ENCODE measurements at regions of chr19 and their contacts with region 1.

Region 1: DNA sequence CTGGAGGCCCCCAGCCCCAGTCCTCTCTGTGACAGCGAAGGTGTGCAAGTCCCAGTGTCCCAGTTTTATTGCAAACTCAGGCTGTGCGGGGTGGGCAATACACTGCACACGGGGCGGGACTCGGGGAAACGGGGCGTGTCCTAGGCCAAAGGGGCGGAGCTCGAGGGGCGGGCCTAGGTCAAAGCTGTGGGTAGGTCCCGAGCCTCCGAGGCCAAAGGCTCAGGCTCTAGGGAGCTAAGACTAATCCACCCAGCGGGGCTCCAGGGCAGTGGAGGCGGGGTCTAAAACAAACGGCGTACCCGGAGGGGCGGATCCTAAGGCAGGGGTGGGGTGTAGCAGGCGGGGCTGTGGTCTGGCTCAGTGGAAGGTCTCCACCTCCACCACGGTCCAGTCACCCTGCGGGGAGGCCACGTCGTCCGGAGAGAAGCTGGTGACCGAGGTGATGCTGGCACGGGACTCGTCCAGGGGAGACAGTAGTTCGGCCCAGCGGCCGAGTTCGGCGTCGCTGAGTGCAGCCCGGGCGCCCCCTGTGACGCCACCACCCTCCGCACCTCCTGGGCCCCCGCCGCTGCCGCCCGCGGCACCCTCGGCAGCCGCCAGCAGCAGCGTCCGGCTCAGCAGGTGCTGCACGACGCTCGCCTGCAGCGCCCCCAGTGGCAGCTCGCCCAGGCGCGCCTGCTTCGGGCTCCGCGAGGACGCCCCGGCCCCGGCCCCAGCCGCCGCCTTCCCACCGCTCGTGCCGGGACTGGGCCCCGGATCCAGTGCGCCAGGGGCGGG is 5.3 kb downstream of the PRR36 start:
- DNase-seq: peak; percentile 85 to 95 (median 92)
- H3K4me3 ChIP-seq: peak overlapping the region; percentile 28 to 75
- H3K4me3 Mint-ChIP-seq: peak overlapping the region; percentile 73 to 88 (median 80)
- H3K27ac ChIP-seq: peak overlapping the region; percentile 61
- H3K27ac Mint-ChIP-seq: peak overlapping the region; percentile 83 to 96 (median 91)
- H3K4me1 ChIP-seq: peaks cover 43% of the 10 kb centered on the region
- H3K4me1 Mint-ChIP-seq: peaks cover 21 to 48% (median 36%) of the 10 kb centered on the region in 4 donors
- H3K27me3 ChIP-seq: no peaks in the 10 kb centered on the region
- H3K27me3 Mint-ChIP-seq: peaks cover 5 to 17% of the 10 kb centered on the region in 2 donors

Region 2: GRCh38 chr19:7562646-7563393 is 306.0 kb before region 1 on chr19:
- CTCF ChIA-PET with region 1: interaction called, 13 read pairs
- POLR2A ChIA-PET with region 1: no interaction called
- intact Hi-C with region 1: no loop called
- DNase-seq: peak in 1 of 5 donors; percentile 5
- H3K4me3 ChIP-seq: no peak overlapping the region
- H3K4me3 Mint-ChIP-seq: no peak overlapping the region
- H3K27ac ChIP-seq: no peak overlapping the region
- H3K27ac Mint-ChIP-seq: no peak overlapping the region
- H3K4me1 ChIP-seq: no peaks in the 10 kb centered on the region
- H3K4me1 Mint-ChIP-seq: no peaks in the 10 kb centered on the region
- H3K27me3 ChIP-seq: no peaks in the 10 kb centered on the region
- H3K27me3 Mint-ChIP-seq: no peaks in the 10 kb centered on the region

Region 3: DNA sequence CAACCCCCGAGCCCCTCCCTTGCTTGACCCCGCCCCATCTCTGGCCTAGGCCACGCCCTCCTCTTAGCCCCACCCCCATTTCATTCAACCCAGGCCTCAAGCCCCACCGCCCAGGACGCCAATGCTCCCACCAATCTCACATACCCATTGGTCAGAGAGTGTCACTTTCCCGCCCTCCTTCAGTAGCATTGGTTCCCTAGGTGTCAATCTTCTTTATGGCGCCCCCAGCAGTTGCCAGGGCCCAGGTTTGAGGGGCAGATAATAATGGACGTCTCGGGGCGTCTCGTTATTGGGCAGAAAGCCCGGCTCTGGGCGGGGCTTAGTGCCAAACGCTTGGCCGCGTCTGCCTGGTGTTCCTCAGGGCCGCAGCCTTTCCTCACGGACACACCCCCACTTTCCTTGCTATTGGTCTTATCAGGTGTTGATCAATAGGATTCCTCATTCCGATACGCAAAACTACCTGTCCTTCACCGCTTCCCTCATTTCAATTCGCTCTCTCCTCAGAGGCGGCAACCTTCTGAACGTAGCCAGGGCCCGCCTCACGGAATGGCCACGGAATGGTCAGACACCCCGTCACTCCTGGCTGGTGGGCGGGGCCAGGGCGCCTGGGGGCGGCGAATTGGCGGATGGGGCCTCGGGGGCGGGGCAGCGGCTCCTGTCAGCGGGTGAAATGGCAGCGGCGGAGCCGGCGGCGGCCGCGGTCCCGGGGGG is 39.1 kb before region 1 on chr19 and contains the start of gene EVI5L:
- CTCF ChIA-PET with region 1: interaction called, 7 read pairs
- POLR2A ChIA-PET with region 1: interaction called, 4 read pairs
- intact Hi-C with region 1: loop called (anchors 1 kb)
- DNase-seq: peak; percentile 99
- H3K4me3 ChIP-seq: peak within 1 kb of the TSS in 1 of 2 donors; percentile 50
- H3K4me3 Mint-ChIP-seq: peak within 1 kb of the TSS; percentile 76 to 88 (median 86)
- H3K27ac ChIP-seq: peak within 1 kb of the TSS; percentile 36
- H3K27ac Mint-ChIP-seq: peak within 1 kb of the TSS; percentile 63 to 90 (median 87)
- H3K4me1 ChIP-seq: peaks cover 22% of the 10 kb centered on the region
- H3K4me1 Mint-ChIP-seq: peaks cover 11 to 28% (median 18%) of the 10 kb centered on the region in 4 donors
- H3K27me3 ChIP-seq: no peaks in the 10 kb centered on the region
- H3K27me3 Mint-ChIP-seq: no peaks in the 10 kb centered on the region
- total RNA-seq, gene EVI5L: 11.9 to 14.1 TPM

Region 4: GRCh38 chr19:7852851-7853769 is 15.8 kb before region 1 on chr19:
- CTCF ChIA-PET with region 1: interaction called, 16 read pairs
- POLR2A ChIA-PET with region 1: interaction called, 3 read pairs
- intact Hi-C with region 1: no loop called
- DNase-seq: peak; percentile 47 to 60 (median 54)
- H3K4me3 ChIP-seq: no peak overlapping the region
- H3K4me3 Mint-ChIP-seq: no peak overlapping the region
- H3K27ac ChIP-seq: no peak overlapping the region
- H3K27ac Mint-ChIP-seq: peak overlapping the region in 1 of 7 donors; percentile 77
- H3K4me1 ChIP-seq: peaks cover 8% of the 10 kb centered on the region
- H3K4me1 Mint-ChIP-seq: peaks cover 3 to 10% (median 6%) of the 10 kb centered on the region in 4 donors
- H3K27me3 ChIP-seq: no peaks in the 10 kb centered on the region
- H3K27me3 Mint-ChIP-seq: no peaks in the 10 kb centered on the region

Region 5: DNA sequence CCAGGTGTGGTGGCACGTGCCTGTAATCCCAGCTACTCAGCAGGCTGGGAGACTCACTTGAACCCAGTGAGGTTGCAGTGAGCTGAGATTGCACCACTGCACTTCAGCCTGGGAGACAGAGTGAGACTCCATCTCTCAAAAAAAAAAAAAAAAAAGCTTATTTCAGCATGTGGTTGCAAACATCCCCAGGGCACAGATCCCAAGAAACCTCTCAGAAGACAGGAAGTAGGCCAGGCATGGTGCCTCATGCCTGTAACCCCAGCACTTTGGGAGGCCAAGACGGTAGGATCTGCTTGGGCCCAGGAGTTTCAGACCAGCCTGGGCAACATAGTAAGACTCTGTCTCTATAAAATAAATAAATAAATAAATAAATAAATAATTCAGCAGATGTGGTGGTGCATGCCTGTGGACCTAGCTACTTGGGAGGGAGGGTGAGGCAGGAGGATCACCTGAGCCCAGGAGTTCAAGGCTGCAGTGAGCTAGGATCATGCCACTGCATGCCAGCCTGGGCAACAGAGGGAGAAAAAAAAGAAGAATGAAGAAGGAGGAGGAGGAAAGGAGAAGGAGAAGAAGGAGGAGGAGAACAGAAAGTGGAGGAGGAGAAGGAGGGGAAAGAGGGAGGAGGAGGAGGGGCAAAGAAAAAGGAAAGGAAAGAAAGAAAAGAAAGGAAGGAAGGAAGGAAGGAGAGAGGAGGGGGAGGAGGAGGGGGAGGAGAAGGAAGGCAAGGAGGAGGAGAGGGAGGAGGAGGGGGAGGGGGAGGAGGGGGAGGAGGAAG is 15.1 kb after region 1 on chr19:
- CTCF ChIA-PET with region 1: interaction called, 19 read pairs
- POLR2A ChIA-PET with region 1: interaction called, 3 read pairs
- intact Hi-C with region 1: no loop called
- DNase-seq: no peak
- H3K4me3 ChIP-seq: no peak overlapping the region
- H3K4me3 Mint-ChIP-seq: no peak overlapping the region
- H3K27ac ChIP-seq: no peak overlapping the region
- H3K27ac Mint-ChIP-seq: no peak overlapping the region
- H3K4me1 ChIP-seq: no peaks in the 10 kb centered on the region
- H3K4me1 Mint-ChIP-seq: no peaks in the 10 kb centered on the region
- H3K27me3 ChIP-seq: no peaks in the 10 kb centered on the region
- H3K27me3 Mint-ChIP-seq: peaks cover 0 to 2% of the 10 kb centered on the region in 2 donors

Region 6: GRCh38 chr19:7903244-7904073 is 34.6 kb after region 1 on chr19 and contains the start of gene MAP2K7:
- CTCF ChIA-PET with region 1: interaction called, 33 read pairs
- POLR2A ChIA-PET with region 1: interaction called, 26 read pairs
- intact Hi-C with region 1: loop called (anchors 1 kb)
- DNase-seq: peak; percentile 100
- H3K4me3 ChIP-seq: peak within 1 kb of the TSS; percentile 61 to 96
- H3K4me3 Mint-ChIP-seq: peak within 1 kb of the TSS; percentile 88 to 99 (median 90)
- H3K27ac ChIP-seq: peak within 1 kb of the TSS; percentile 83
- H3K27ac Mint-ChIP-seq: peak within 1 kb of the TSS; percentile 94 to 100 (median 97)
- H3K4me1 ChIP-seq: peaks cover 32% of the 10 kb centered on the region
- H3K4me1 Mint-ChIP-seq: peaks cover 15 to 37% (median 26%) of the 10 kb centered on the region in 4 donors
- H3K27me3 ChIP-seq: no peaks in the 10 kb centered on the region
- H3K27me3 Mint-ChIP-seq: peaks cover 2 to 5% of the 10 kb centered on the region in 2 donors
- total RNA-seq, gene MAP2K7: 59.7 to 62.5 TPM